Sciatic nerve (tissue), 2 donors: ENCODE measurements at regions of chr12 and their contacts with region 1.

Region 1: DNA sequence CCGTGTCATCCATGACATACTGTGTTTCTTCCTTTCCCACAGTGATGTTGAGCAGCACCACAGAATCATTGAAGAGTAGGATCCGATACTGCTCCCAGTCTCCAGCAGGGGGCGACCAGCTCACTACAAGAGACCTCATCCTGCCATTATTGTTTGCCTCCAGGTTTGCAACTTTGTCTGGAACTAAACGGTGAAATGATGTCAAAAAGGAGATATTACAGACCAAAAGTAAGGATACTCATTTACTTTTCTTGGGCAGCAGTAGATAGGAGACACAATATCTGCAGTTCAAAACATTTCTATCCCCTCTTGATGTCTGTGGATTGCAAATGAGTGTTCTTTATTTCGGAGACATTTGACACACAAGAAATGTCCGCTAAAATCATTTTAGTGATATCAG is 47.2 kb downstream of the PTPRB start:
- DNase-seq: peak; percentile 84
- ATAC-seq: peak; percentile 82

Region 2: DNA sequence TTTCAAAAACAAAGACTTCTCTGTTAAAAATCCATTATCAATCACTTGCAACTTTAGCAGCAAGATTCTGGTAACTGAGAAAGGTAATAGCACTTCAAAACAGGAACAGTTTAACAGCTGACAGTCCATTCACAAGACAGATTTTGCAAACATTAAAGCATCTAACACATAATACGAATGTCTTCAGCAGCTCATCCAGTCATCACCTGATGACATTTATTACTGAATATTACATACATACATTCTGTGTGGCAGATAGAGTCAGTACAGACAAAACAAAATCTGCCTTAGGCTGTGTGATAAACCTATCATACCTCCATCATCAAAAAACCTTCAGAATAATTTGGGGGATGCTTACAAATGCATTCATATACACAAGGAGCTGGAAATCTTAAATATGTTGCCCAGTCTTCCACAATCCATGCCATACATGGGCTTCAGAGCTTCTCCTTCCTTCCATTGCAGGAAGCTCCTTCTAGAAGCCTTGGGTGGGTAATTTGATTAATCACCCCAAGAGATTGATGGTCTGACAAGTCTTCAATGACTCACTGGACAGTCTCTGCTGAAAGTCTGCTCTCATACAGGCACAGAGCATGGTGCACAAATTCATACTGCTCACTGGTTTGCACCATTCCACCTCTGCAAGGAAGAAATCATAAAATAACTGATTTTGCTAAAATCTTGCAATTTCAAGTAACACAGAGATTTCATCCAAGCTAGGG is 48.7 kb after region 1 on chr12:
- intact Hi-C with region 1: loop called (anchors 1 kb)
- DNase-seq: no peak
- ATAC-seq: no peak

Region 3: DNA sequence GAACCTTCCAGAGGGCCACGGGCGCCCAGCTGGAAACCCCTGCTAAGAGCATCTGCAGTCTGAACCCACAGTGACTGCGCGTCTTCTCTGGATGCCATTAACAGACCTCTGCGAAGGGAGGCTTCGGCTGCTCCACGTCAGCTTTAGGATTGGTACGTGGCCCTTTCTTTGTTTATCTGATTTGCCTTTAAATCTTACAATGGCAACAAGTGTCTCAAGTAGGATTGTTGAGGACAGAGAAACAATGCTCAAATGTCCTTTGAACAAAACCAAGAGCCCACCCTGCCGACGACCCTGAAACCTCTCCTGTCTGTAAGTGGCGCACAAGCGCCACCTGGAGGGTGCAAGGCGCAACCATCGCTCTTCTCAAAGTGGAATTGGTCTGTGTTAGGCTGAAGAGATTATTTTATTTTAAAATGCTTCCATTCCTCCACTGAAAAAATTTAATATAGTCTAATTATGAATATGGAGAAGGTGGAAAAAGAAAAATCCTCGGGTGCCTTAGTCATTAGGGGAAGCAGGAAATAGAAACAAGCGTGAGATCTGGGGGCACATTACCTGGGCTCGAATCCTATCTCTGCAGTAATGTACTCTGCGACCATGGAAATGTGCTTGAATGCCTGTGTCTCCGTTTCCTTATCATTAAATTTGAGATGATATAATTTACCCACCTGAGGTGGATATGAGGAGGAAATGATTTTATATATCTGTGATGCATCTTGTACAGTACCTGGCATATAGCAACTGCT is 129.8 kb after region 1 on chr12:
- intact Hi-C with region 1: loop called (anchors 10 kb)
- DNase-seq: peak; percentile 64
- ATAC-seq: peak; percentile 82